Activated naive CD8-positive, alpha-beta T cell treated with anti-CD3 and anti-CD28 coated beads, Interleukin-2, amount 10 ng/mL, durations not matched to agents 7 days and 5 days (primary cell): ENCODE measurements at regions of chr9 and their contacts with region 1.

Region 1: DNA sequence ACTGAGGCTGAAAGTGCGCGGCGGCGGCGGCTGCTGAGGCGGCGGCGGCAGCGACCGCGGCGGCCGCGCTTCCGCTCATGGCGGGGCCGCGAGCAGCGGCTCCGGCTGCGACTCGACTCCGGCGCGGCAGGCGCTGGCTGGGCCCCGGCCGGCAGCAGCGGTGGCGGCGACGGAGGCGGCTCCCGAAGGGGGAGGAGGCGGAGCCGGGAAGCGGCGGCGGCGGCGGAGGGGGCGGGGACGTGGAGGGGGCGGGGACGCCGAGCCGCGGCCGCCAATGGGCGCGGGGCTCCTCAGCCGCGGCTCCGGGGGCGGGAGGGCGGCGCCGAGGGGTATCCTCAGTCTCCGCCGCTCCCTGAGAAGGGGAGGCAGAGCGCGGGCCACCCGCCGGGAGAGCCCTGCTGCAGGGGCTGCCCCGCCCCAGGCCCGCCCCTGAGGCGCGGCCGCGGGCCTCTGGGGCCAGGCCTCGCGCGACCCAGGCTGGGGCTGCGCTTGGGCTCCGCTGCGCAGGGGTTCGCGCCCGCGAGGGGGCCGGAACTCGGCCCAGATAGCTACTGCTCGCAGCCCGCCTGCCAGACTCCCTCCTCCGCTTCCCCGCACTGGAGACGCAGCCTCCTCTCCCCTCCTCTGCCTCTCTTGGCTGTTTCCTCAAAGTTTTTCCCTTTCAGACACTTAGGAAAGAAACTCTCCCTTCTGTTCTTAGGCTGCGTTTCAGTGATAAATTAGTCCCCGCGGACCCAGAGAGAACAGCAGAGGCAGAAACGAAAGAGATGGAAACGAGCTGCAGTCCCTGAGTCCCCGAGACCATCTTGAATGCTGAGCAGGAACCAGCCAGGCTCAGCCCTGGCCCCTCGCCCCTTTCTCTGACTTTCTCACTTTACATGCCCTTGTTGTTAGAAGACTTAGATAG is 85.0 kb upstream of the MELK start:
- DNase-seq: peak; percentile 94
- ATAC-seq: peak; percentile 95
- H3K4me3 Mint-ChIP-seq: peak overlapping the region; percentile 90
- H3K27ac Mint-ChIP-seq: peak overlapping the region; percentile 98
- H3K4me1 Mint-ChIP-seq: peaks cover 44% of the 10 kb centered on the region
- H3K27me3 Mint-ChIP-seq: no peaks in the 10 kb centered on the region

Region 2: GRCh38 chr9:36461323-36461722 is 26.4 kb before region 1 on chr9:
- POLR2A ChIA-PET with region 1: interaction called, 60 read pairs
- DNase-seq: no peak
- ATAC-seq: no peak
- H3K4me3 Mint-ChIP-seq: no peak overlapping the region
- H3K27ac Mint-ChIP-seq: peak overlapping the region; percentile 18
- H3K4me1 Mint-ChIP-seq: peaks cover 59% of the 10 kb centered on the region
- H3K27me3 Mint-ChIP-seq: no peaks in the 10 kb centered on the region

Region 3: DNA sequence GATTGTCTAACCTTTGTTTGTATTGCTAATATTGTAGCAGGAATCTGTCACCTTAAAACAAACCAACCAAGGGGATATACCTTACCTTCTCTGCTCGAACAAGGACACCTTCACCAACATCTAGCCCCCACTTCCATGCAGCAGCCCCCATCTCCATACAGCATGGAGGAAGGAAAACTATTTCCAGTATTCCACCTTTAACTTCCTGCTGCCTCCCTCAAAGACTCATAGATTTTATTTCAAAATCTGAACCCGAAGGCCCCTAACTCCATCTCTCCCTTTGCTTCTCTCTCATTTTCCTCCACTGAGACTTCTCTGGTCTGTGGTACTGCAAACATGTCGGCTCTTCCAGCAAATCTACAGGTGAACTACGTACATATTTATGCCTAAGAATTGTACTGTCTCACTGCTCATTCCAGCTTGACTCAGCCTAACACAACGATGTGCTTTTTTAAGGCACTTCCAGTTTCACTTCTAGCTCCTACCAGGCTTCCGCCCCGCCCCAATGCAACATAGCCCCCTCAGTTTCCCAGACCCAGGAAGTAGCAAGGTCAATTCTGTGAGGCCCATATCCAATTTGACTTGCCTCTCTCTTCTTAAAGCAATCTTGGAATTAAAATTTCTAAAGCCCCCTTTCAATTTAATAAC is 17.0 kb before region 1 on chr9:
- POLR2A ChIA-PET with region 1: interaction called, 33 read pairs
- DNase-seq: peak; percentile 66
- ATAC-seq: peak; percentile 96
- H3K4me3 Mint-ChIP-seq: peak overlapping the region; percentile 94
- H3K27ac Mint-ChIP-seq: peak overlapping the region; percentile 93
- H3K4me1 Mint-ChIP-seq: peaks cover 29% of the 10 kb centered on the region
- H3K27me3 Mint-ChIP-seq: no peaks in the 10 kb centered on the region

Region 4: DNA sequence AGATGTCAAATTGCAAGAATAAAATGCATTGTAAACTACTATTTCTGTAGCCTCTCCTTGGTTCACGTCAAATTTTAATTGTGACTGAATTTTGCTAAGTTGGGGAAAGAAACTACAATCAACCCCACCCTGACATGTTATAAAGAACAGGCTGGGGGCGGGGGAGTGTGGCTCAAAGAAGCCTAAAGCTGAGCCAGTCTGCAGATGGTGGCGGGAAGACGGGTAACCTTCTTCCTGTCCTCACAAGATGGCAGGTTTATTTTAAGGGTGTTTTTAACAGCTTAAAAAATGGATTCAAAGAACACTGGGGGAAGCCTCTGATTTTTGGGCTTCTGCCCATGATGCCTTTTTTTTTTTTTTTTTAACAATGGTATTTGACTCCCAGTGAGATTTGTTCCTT is 16.4 kb after region 1 on chr9:
- POLR2A ChIA-PET with region 1: interaction called, 22 read pairs
- DNase-seq: no peak
- ATAC-seq: peak; percentile 64
- H3K4me3 Mint-ChIP-seq: peak overlapping the region; percentile 12
- H3K27ac Mint-ChIP-seq: peak overlapping the region; percentile 81
- H3K4me1 Mint-ChIP-seq: peaks cover 28% of the 10 kb centered on the region
- H3K27me3 Mint-ChIP-seq: no peaks in the 10 kb centered on the region

Region 5: DNA sequence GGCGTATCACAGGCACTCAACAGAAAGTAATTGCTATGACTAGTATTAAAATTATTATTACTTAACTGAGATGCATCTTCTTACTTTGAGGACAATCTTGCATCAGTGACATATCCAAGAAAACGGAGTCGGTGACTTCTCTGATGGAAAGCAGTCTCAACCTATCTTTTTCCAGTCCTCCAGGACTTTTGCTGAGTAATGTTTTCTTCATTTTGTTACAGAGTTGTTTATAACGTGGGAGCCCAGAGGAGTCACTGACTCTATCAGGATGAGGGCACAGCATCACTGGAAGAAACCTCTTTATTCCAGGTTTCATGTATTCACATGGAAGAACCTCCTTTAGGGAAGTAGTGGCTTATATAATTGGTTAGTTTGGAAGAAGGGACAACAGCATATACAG is 33.4 kb after region 1 on chr9:
- POLR2A ChIA-PET with region 1: no interaction called
- DNase-seq: no peak
- ATAC-seq: no peak
- H3K4me3 Mint-ChIP-seq: no peak overlapping the region
- H3K27ac Mint-ChIP-seq: no peak overlapping the region
- H3K4me1 Mint-ChIP-seq: peaks cover 1% of the 10 kb centered on the region
- H3K27me3 Mint-ChIP-seq: peaks cover 2% of the 10 kb centered on the region